Activated CD4-positive, alpha-beta memory T cell treated with anti-CD3 and anti-CD28 coated beads, Interleukin-2, amount 10 ng/mL, durations not matched to agents 7 days and 5 days (primary cell): ENCODE measurements at regions of chr16 and their contacts with region 1.

Region 1: GRCh38 chr16:89700100-89700648 is 1.3 kb downstream of the SPATA2L start:
- DNase-seq: peak; percentile 96
- H3K4me3 Mint-ChIP-seq: peak overlapping the region; percentile 64
- H3K27ac Mint-ChIP-seq: peak overlapping the region; percentile 58
- H3K4me1 Mint-ChIP-seq: peaks cover 37% of the 10 kb centered on the region
- H3K27me3 Mint-ChIP-seq: no peaks in the 10 kb centered on the region

Region 2: GRCh38 chr16:89651584-89651983 is 48.6 kb before region 1 on chr16:
- CTCF ChIA-PET with region 1: no interaction called
- POLR2A ChIA-PET with region 1: no interaction called
- DNase-seq: no peak
- H3K4me3 Mint-ChIP-seq: no peak overlapping the region
- H3K27ac Mint-ChIP-seq: no peak overlapping the region
- H3K4me1 Mint-ChIP-seq: peaks cover 23% of the 10 kb centered on the region
- H3K27me3 Mint-ChIP-seq: no peaks in the 10 kb centered on the region

Region 3: GRCh38 chr16:89686520-89687091 is 13.6 kb before region 1 on chr16 and contains the start of gene CDK10:
- CTCF ChIA-PET with region 1: interaction called, 26 read pairs
- POLR2A ChIA-PET with region 1: interaction called, 36 read pairs
- DNase-seq: peak; percentile 92
- H3K4me3 Mint-ChIP-seq: peak within 1 kb of the TSS; percentile 91
- H3K27ac Mint-ChIP-seq: peak within 1 kb of the TSS; percentile 85
- H3K4me1 Mint-ChIP-seq: peaks cover 18% of the 10 kb centered on the region
- H3K27me3 Mint-ChIP-seq: no peaks in the 10 kb centered on the region
- total RNA-seq, gene CDK10: 73.2 to 74.0 TPM

Region 4: GRCh38 chr16:89720813-89721545 is 20.8 kb after region 1 on chr16 and contains the starts of genes VPS9D1 and ZNF276:
- CTCF ChIA-PET with region 1: interaction called, 22 read pairs
- POLR2A ChIA-PET with region 1: interaction called, 49 read pairs
- DNase-seq: peak; percentile 84
- H3K4me3 Mint-ChIP-seq: peak within 1 kb of the TSS; percentile 96
- H3K27ac Mint-ChIP-seq: peak within 1 kb of the TSS; percentile 100
- H3K4me1 Mint-ChIP-seq: peaks cover 40% of the 10 kb centered on the region
- H3K27me3 Mint-ChIP-seq: no peaks in the 10 kb centered on the region
- total RNA-seq, gene VPS9D1: 7.0 to 7.8 TPM
- total RNA-seq, gene ZNF276: 50.4 to 56.5 TPM

Region 5: GRCh38 chr16:89761304-89761922 is 61.2 kb after region 1 on chr16:
- CTCF ChIA-PET with region 1: interaction called, 18 read pairs
- POLR2A ChIA-PET with region 1: interaction called, 6 read pairs
- DNase-seq: no peak
- H3K4me3 Mint-ChIP-seq: peak overlapping the region; percentile 76
- H3K27ac Mint-ChIP-seq: peak overlapping the region; percentile 87
- H3K4me1 Mint-ChIP-seq: peaks cover 54% of the 10 kb centered on the region
- H3K27me3 Mint-ChIP-seq: no peaks in the 10 kb centered on the region

Region 6: GRCh38 chr16:89909777-89910716 is 209.9 kb after region 1 on chr16:
- CTCF ChIA-PET with region 1: interaction called, 18 read pairs
- POLR2A ChIA-PET with region 1: no interaction called
- DNase-seq: peak; percentile 77
- H3K4me3 Mint-ChIP-seq: no peak overlapping the region
- H3K27ac Mint-ChIP-seq: no peak overlapping the region
- H3K4me1 Mint-ChIP-seq: peaks cover 10% of the 10 kb centered on the region
- H3K27me3 Mint-ChIP-seq: no peaks in the 10 kb centered on the region